Heart left ventricle (tissue), 16 donors: ENCODE measurements at regions of chr15 and their contacts with region 1.

Region 1: DNA sequence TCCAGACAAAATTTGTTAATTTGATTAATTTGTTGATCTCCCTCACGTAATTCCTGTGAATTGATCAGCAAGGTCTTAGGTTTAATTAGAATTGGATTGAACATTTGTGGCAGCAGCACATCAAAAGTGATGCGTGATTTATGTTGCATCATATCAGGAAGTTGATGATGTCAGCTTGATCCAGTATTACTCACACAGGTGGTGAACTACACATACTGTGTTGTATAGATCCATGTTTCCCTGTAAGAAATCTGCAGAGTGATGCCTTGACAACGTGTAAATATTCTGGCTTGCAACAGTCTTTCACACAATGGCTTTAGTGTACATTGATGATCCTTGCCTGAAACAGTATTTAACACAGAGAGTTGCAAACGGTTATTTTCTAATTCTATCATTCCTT is 200.4 kb downstream of the ADAMTSL3 start:
- DNase-seq: no peak
- ATAC-seq: no peak
- H3K4me3 ChIP-seq: no peak overlapping the region
- H3K27ac ChIP-seq: peak overlapping the region in 2 of 12 donors; percentile 5 to 55
- H3K4me1 ChIP-seq: peaks cover 0 to 36% (median 13%) of the 10 kb centered on the region in 12 donors
- H3K27me3 ChIP-seq: no peaks in the 10 kb centered on the region
- CTCF ChIP-seq: no peak
- POLR2A ChIP-seq: no peak

Region 2: DNA sequence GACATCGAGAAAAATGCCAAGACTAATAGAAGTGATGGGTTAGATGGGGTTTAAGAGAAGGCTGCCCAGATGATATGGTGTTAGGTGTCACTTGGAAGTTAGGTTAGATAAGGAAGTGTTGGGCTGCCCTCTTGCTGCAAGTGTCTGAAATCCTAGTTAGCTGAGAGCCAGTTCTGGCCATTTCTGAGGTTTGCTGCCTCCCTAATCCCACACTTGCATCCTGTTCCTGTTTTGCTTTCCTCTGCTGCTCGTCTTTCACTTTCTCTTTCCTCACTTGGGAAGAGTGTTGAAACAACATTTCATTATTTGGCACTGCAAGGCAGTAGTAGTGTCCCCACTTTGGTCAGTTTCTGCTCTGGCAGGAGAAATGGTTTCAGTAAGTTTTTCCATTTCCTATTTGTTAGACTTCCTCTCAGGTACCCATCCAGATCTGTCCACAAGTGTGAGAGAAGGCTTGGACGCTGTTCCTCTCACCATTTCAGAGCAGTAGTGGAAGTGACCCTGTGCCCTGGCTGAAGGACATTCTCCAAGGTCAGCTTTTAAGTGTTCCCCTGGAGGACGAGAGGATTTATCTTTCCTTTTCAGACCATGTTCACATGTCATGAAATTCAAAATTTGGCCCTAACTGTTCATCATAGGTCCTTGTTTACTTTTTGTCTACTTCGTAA is 107.1 kb before region 1 on chr15:
- intact Hi-C with region 1: loop called in 1 of 10 experiments (anchors 5 kb)
- DNase-seq: peak in 4 of 5 donors; percentile 28 to 44 (median 35)
- ATAC-seq: peak; percentile 59 to 89 (median 85)
- H3K4me3 ChIP-seq: peak overlapping the region in 8 of 12 donors; percentile 4 to 42 (median 16)
- H3K27ac ChIP-seq: peak overlapping the region in 11 of 12 donors; percentile 6 to 81 (median 54)
- H3K4me1 ChIP-seq: peaks cover 0 to 25% (median 10%) of the 10 kb centered on the region in 12 donors
- H3K27me3 ChIP-seq: no peaks in the 10 kb centered on the region
- CTCF ChIP-seq: peak; percentile 7 to 62 (median 40)
- POLR2A ChIP-seq: no peak

Region 3: DNA sequence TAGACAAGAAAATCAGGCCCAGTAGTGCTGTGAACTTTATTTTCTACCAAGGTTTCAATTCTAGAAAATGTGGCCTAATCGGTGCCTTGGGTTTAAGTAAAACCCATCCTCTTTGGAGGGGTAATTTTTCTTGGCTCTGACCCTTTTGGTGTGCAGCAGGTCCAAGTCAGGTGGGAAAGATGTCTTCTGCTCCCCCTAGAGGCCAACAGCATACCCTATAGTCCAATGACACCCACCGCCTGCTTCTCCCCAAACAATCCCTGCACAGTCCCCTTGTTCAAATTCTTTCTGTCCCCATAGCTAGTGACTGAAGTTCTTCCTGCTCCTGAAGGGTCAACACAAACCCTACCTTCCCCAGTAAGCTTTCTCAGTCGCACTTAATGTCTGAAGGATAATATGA is 119.5 kb after region 1 on chr15:
- intact Hi-C with region 1: loop called in 1 of 10 experiments (anchors 10 kb)
- DNase-seq: no peak
- ATAC-seq: no peak
- H3K4me3 ChIP-seq: no peak overlapping the region
- H3K27ac ChIP-seq: no peak overlapping the region
- H3K4me1 ChIP-seq: peaks cover 0 to 6% (median 0%) of the 10 kb centered on the region in 12 donors
- H3K27me3 ChIP-seq: no peaks in the 10 kb centered on the region
- CTCF ChIP-seq: peak in 9 of 12 donors; percentile 8 to 34 (median 17)
- POLR2A ChIP-seq: no peak